OCI-LY7 (cell line): ENCODE measurements at regions of chr1 and their contacts with region 1.

Region 1: GRCh38 chr1:220089650-220090556 is at the start of gene BPNT1:
- DNase-seq: peak; percentile 97
- H3K4me3 ChIP-seq: peak within 1 kb of the TSS; percentile 95
- H3K27ac ChIP-seq: peak within 1 kb of the TSS; percentile 84
- H3K4me1 ChIP-seq: peaks cover 40% of the 10 kb centered on the region
- CTCF ChIP-seq: peak; percentile 44
- total RNA-seq, gene BPNT1: 43.0 and 48.7 TPM in 2 replicates

Region 2: GRCh38 chr1:218284934-218285635 is 1804.8 kb before region 1 on chr1 and contains the start of gene RRP15:
- CTCF ChIA-PET with region 1: no interaction called
- POLR2A ChIA-PET with region 1: no interaction called
- intact Hi-C with region 1: loop called (anchors 5 kb)
- DNase-seq: peak; percentile 91
- H3K4me3 ChIP-seq: peak within 1 kb of the TSS; percentile 96
- H3K27ac ChIP-seq: peak within 1 kb of the TSS; percentile 48
- H3K4me1 ChIP-seq: peaks cover 19% of the 10 kb centered on the region
- CTCF ChIP-seq: no peak
- total RNA-seq, gene RRP15: 7.2 and 19.6 TPM in 2 replicates

Region 3: DNA sequence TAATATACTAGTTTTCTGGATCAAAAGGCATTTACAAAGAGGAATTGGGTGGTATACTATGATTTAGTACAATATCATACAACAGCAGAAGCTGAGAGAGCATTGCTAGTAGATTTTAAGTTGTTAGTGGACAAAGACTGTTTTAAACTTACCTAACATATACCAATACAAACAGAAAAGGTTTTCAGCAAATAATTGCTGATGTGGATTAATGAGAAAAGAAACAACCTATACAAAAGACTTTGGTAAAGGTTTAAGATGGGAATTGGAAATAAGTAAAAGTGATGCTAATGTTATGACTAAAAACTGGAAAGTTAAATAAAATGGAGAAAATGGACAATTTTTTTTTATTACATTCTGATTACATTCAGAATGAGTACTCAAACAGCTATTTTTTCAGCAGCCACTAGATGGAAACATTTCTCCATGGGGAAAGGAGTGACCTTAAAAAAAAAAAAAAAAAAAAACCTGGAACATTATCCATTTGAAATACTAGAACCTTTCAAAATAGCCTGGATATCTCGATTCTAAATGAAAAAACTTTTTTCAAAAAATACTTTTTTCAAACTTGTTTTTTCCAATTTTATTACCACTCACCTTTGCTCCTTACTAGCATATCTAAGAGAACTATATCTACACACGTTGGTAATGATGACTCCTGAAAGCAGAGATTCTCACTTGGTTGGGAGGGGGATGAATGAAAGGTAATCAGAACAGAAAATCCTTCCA is 99.0 kb before region 1 on chr1:
- CTCF ChIA-PET with region 1: no interaction called
- POLR2A ChIA-PET with region 1: interaction called, 3 read pairs
- intact Hi-C with region 1: loop called (anchors 5 kb)
- DNase-seq: peak; percentile 51
- H3K4me3 ChIP-seq: no peak overlapping the region
- H3K27ac ChIP-seq: no peak overlapping the region
- H3K4me1 ChIP-seq: no peaks in the 10 kb centered on the region
- CTCF ChIP-seq: peak; percentile 86

Region 4: GRCh38 chr1:220046052-220046930 is 43.6 kb before region 1 on chr1 and contains the start of gene EPRS1:
- CTCF ChIA-PET with region 1: no interaction called
- POLR2A ChIA-PET with region 1: interaction called, 4 read pairs
- intact Hi-C with region 1: loop called (anchors 1 kb)
- DNase-seq: peak; percentile 98
- H3K4me3 ChIP-seq: peak within 1 kb of the TSS; percentile 89
- H3K27ac ChIP-seq: peak within 1 kb of the TSS; percentile 74
- H3K4me1 ChIP-seq: peaks cover 25% of the 10 kb centered on the region
- CTCF ChIP-seq: peak; percentile 54
- total RNA-seq, gene EPRS1: 93.1 and 101 TPM in 2 replicates

Region 5: DNA sequence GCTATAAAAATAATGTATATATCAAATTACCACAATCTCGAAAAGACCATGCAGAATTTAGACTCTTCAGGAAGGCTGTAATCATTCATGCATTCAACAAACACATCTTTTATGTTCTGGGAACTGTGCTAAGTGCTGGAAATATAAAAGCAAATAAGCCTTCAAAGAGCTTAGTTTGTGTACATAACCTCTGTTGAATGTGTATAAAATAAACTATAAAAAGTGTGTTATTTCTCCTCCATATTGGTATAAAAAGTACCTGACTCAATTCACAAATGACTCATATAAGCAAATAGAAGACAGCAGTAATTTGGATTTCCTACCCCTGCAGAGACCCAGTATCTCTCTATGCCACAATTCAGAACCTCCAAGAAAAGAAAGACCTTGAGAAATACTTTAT is 145.6 kb after region 1 on chr1:
- CTCF ChIA-PET with region 1: no interaction called
- POLR2A ChIA-PET with region 1: no interaction called
- intact Hi-C with region 1: no loop called
- DNase-seq: no peak
- H3K4me3 ChIP-seq: no peak overlapping the region
- H3K27ac ChIP-seq: no peak overlapping the region
- H3K4me1 ChIP-seq: no peaks in the 10 kb centered on the region
- CTCF ChIP-seq: no peak

Region 6: GRCh38 chr1:220272047-220272840 is 182.3 kb after region 1 on chr1 and contains the start of gene RAB3GAP2:
- CTCF ChIA-PET with region 1: no interaction called
- POLR2A ChIA-PET with region 1: no interaction called
- intact Hi-C with region 1: loop called (anchors 5 kb)
- DNase-seq: peak; percentile 97
- H3K4me3 ChIP-seq: peak within 1 kb of the TSS; percentile 84
- H3K27ac ChIP-seq: peak within 1 kb of the TSS; percentile 37
- H3K4me1 ChIP-seq: peaks cover 25% of the 10 kb centered on the region
- CTCF ChIP-seq: no peak
- total RNA-seq, gene RAB3GAP2: 16.9 and 22.6 TPM in 2 replicates

Region 7: GRCh38 chr1:220604934-220605333 is 515.0 kb after region 1 on chr1:
- CTCF ChIA-PET with region 1: no interaction called
- POLR2A ChIA-PET with region 1: no interaction called
- intact Hi-C with region 1: no loop called
- DNase-seq: no peak
- H3K4me3 ChIP-seq: no peak overlapping the region
- H3K27ac ChIP-seq: no peak overlapping the region
- H3K4me1 ChIP-seq: no peaks in the 10 kb centered on the region
- CTCF ChIP-seq: no peak